Spleen (tissue), 13 donors: ENCODE measurements at regions of chr1 and their contacts with region 1.

Region 1: GRCh38 chr1:78676347-78676982 is 26.8 kb downstream of the IFI44 start:
- DNase-seq: no peak
- H3K4me3 ChIP-seq: no peak overlapping the region
- H3K27ac ChIP-seq: no peak overlapping the region
- H3K4me1 ChIP-seq: peaks cover 0 to 8% (median 6%) of the 10 kb centered on the region in 6 donors
- H3K27me3 ChIP-seq: no peaks in the 10 kb centered on the region
- CTCF ChIP-seq: peak; percentile 65 to 91 (median 82)
- POLR2A ChIP-seq: no peak

Region 2: DNA sequence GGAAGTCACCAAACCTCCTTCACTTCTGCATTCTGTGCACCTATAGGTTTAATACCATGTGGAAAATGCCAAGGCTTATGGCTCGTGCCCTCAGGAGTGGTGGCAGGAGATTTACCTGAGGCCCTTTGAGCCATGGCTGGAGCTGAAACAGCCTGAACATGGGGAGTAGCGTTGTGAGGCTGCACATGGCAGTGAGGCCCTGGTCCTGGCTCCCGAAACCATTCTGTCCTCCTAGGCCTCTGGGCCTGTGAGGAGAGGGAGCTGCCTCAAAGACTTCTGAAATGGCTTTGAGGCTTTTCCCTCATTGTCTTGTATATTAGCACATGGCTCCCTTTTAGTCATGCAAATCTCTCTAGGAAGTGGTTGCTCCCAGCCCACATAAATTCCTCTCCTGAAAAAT is 165.1 kb before region 1 on chr1:
- intact Hi-C with region 1: no loop called
- DNase-seq: no peak
- H3K4me3 ChIP-seq: no peak overlapping the region
- H3K27ac ChIP-seq: no peak overlapping the region
- H3K4me1 ChIP-seq: no peaks in the 10 kb centered on the region
- H3K27me3 ChIP-seq: no peaks in the 10 kb centered on the region
- CTCF ChIP-seq: no peak
- POLR2A ChIP-seq: no peak

Region 3: DNA sequence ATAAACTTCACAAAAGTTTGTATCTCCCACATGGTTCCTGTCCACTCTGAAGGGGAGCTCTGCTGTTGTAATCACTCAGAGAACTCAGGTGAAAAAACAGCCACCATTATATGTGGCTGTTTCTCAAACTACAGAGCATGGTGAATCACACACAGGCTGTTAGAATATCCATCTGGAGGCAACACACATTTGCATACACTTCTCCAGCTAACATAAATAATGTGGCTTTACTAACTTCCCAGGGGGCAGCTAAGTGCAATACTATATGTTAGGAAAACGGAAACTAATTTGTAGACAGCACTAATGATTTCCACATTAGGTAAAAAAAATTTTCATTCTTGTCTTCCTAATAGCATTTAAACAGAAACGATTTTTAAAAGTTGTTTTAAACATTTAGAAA is 136.4 kb before region 1 on chr1:
- intact Hi-C with region 1: no loop called
- DNase-seq: no peak
- H3K4me3 ChIP-seq: no peak overlapping the region
- H3K27ac ChIP-seq: no peak overlapping the region
- H3K4me1 ChIP-seq: no peaks in the 10 kb centered on the region
- H3K27me3 ChIP-seq: no peaks in the 10 kb centered on the region
- CTCF ChIP-seq: no peak
- POLR2A ChIP-seq: no peak

Region 4: GRCh38 chr1:78617615-78618026 is 58.8 kb before region 1 on chr1:
- intact Hi-C with region 1: loop called (anchors 5 kb)
- DNase-seq: peak; percentile 79
- H3K4me3 ChIP-seq: peak overlapping the region in 1 of 8 donors; percentile 24
- H3K27ac ChIP-seq: peak overlapping the region in 3 of 8 donors; percentile 30 to 91 (median 84)
- H3K4me1 ChIP-seq: peaks cover 5 to 56% (median 43%) of the 10 kb centered on the region in 6 donors
- H3K27me3 ChIP-seq: no peaks in the 10 kb centered on the region
- CTCF ChIP-seq: peak; percentile 50 to 90 (median 80)
- POLR2A ChIP-seq: no peak

Region 5: DNA sequence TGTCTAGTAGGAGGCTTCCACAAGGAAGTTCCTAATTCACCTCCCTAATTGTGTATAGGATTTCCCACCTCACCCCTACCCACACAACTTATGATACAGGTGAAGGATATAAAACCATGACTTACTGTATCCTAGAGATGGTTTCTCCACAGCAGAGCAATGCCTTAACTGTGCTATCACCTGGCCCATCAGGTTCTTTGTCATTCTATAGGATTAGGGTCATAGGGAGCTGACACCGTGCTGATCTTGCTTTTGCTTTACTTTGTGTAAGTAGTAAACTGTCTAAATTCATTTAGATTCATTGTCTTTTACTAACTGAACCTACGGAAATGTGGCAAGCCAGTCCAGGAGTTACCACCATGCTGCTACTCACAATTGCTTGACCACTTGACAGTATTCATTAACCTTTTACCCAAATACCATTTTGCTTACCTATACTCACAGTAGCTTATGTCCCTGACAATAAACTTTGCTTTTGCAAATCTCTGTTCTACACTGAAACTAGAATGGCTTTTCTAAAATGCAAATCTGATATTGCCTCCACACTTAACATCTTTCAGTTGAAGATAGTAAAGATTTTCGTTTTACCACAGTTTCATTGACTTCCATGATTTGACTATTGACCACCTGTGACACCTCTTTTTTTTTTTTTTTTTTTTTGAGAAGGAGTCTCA is 120.8 kb after region 1 on chr1:
- intact Hi-C with region 1: no loop called
- DNase-seq: no peak
- H3K4me3 ChIP-seq: no peak overlapping the region
- H3K27ac ChIP-seq: no peak overlapping the region
- H3K4me1 ChIP-seq: no peaks in the 10 kb centered on the region
- H3K27me3 ChIP-seq: no peaks in the 10 kb centered on the region
- CTCF ChIP-seq: no peak
- POLR2A ChIP-seq: no peak